AG04450 (cell line): ENCODE measurements at regions of chr4 and their contacts with region 1.

Region 1: DNA sequence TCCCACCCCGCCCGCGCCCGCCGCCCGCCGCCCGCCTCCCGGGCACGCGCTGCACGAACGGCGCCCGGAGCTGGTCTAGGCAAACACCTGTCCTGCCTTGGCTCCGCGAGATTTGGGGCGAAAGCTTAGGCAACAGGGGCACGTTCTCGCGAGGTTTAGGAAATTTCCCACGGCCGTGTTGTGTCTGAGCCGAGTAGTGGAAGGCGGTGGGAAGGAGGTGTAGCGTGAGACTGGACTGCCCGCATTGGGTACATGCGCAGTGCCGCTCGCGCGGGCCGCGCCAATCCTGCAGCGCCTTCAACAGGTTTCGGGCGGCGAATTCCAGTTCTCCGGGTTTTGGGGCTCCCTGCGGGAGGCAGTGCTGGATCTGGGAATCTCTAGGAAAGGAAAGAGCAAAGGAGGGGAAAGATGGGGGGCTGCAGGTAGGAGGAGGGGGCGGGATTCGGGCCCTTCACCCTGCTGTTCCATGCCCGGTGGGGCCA is 1.3 kb upstream of the RBPJ start:
- DNase-seq: peak; percentile 100
- H3K4me3 ChIP-seq: peak overlapping the region; percentile 98
- H3K27ac ChIP-seq: peak overlapping the region; percentile 97
- H3K27me3 ChIP-seq: no peaks in the 10 kb centered on the region
- CTCF ChIP-seq: 0 out of 2 replicates have a peak, but pooled peaks have one; percentile 18

Region 2: GRCh38 chr4:26039639-26040359 is 279.7 kb before region 1 on chr4:
- CTCF ChIA-PET with region 1: no interaction called
- POLR2A ChIA-PET with region 1: interaction called, 13 read pairs
- DNase-seq: no peak
- H3K4me3 ChIP-seq: no peak overlapping the region
- H3K27ac ChIP-seq: no peak overlapping the region
- H3K27me3 ChIP-seq: no peaks in the 10 kb centered on the region
- CTCF ChIP-seq: no peak

Region 3: DNA sequence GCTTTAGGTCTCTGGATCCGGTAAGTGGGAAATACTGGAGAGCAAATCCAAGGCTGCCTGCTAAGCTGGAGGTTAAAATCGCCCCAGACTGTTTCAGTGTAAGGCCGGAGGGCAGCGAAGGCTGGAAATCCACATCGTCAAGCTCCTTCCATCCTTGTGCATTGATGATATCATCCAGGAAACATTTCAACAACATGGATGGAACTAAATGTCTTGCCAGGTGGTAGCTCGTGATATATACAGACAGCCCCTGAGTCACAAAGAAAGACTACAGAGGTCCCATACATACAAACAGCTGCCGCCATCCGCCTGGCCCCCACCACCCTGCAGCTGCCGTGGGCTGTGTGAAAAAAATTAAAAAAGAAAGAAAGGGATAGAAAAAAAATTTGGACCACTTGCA is 147.6 kb before region 1 on chr4:
- CTCF ChIA-PET with region 1: no interaction called
- POLR2A ChIA-PET with region 1: interaction called, 65 read pairs
- DNase-seq: peak; percentile 99
- H3K4me3 ChIP-seq: no peak overlapping the region; the same call in 1 of the 2 replicates
- H3K27ac ChIP-seq: peak overlapping the region; percentile 96
- H3K27me3 ChIP-seq: no peaks in the 10 kb centered on the region
- CTCF ChIP-seq: no peak